ENCODE measurements at regions of chr12 and their contacts with region 1.

Region 1: GRCh38 chr12:110600254-110600653 is 13.7 kb upstream of the TCTN1 start:
- DNase-seq: peak; percentile 44
- CTCF ChIP-seq: peak; percentile 15

Region 2: DNA sequence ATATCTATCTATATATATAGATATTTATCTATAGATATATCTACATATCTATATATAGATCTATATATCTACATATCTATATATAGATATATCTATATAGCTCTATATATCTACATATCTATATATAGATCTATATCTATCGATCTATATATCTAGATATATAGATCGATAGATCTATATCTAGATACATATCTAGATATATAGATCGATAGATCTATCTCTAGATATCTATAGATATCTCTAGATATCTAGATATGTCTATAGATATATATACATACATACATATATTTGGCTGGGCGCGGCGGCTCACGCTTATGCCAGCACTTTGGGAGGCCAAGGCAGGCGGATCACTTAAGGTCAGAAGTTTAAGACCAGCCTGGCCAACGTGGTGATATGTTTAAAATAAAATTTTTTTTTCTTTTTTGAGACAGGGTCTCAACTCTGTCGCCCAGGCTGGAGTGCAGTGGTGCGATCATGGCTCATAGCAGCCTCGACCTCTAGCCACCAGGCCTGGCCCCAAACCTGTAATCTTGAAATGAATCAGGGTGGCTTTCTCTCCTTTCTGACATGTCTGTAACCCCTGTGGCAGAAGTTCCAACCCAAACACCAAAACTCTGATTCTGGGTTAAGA is 168.2 kb before region 1 on chr12:
- CTCF ChIA-PET with region 1: interaction called, 18 read pairs
- POLR2A ChIA-PET with region 1: interaction called, 4 read pairs
- DNase-seq: no peak
- CTCF ChIP-seq: no peak

Region 3: DNA sequence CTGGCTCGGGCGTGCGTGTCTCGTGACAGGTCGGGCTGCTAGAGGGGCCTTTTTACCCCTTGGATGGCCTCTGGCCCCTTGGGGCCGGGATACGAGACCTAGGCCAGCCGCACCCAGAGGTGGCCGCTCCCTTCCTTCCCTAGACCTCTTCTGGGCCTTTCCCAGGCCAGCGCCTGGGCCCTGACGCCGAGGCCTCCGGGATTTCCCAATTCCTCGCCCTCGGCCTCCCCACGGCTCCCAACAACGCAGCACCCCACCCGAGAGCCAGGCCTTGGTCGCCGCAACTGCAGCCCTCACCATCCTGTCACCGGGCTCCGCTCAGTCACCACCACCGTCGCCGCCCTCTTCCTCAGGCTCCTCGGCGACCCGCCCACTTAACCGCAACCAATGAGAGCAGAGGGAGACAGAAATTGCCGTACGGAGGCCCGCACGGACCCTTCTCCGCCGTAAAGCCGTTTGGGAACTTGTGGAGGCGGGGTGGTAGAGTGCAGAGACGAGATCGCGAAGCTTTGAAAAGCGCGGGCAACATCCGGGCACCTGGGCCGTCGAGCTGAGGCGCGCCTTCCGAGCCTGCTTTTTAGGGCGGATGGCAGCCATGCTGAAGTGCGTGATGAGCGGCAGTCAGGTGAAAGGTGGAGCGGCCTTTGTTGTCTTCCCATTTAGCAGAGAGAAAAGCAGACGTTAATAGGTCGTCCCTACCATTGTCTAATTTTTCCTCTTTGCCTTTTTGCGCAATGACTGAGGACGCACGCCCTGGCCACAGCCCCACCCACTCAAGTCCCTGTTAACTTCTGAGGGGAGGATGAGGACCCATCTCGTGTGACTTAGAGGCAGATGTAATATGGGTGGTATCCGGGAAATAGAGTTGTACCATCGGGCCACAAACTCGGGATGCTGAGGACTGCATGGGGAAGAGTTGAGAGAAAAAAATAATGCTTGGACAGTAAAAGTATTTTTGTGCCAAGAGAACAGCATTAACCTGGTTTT is 98.2 kb before region 1 on chr12 and contains the starts of genes RAD9B and VPS29:
- CTCF ChIA-PET with region 1: interaction called, 39 read pairs
- POLR2A ChIA-PET with region 1: no interaction called
- DNase-seq: peak; percentile 94
- CTCF ChIP-seq: no peak

Region 4: DNA sequence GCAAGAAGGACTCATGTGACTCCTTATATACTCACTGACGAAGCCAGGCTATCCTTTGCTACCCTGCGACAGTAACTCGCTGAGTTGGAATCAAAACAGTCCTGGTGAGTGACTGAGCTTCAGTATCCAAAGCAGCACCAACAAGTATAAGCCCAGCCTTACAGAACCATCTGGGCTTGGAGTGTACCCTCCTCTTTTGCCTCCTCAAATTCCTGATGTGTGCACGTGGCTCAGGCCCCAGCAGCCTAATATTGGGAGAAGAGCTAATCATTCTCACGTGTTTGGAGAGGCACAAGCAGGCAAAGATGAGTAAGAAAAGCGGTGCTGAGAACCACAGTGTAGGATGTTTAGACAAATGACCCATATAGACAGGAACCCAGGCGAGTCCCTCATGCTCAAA is 51.6 kb before region 1 on chr12:
- CTCF ChIA-PET with region 1: interaction called, 61 read pairs
- POLR2A ChIA-PET with region 1: no interaction called
- DNase-seq: no peak
- CTCF ChIP-seq: no peak

Region 5: GRCh38 chr12:110583137-110584059 is 16.9 kb before region 1 on chr12 and contains the start of gene PPTC7:
- CTCF ChIA-PET with region 1: interaction called, 74 read pairs
- POLR2A ChIA-PET with region 1: no interaction called
- DNase-seq: peak; percentile 94
- CTCF ChIP-seq: no peak

Region 6: GRCh38 chr12:110698171-110698902 is 98.1 kb after region 1 on chr12:
- CTCF ChIA-PET with region 1: interaction called, 10 read pairs
- POLR2A ChIA-PET with region 1: no interaction called
- DNase-seq: peak; percentile 86
- CTCF ChIP-seq: peak; percentile 80

Measured in GM10248 (cell line).